ENCODE measurements at regions of chr13 and their contacts with region 1.

Region 1: DNA sequence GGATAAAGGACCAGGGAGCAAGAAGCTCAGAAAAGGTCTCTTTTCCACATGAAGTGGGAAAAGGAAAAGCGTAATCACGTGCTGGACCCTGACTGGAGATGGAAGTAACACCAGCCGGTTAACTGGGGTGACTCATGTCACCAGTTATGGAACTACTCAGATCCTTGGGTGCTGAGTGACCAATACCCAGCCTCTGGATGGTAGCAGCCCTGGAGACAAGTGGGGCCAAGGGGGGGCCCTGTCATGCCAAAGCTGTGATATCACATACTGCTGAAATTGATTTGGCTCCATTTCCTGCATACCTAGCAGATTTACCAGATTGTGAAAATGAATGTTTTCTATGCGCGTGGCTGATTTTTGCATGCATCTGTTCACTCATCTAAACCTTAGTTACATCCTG is 158.9 kb downstream of the ZIC5 start:
- DNase-seq: no peak
- H3K4me3 Mint-ChIP-seq: no peak overlapping the region
- H3K27ac Mint-ChIP-seq: no peak overlapping the region
- H3K4me1 Mint-ChIP-seq: peaks cover 6% of the 10 kb centered on the region
- H3K27me3 Mint-ChIP-seq: no peaks in the 10 kb centered on the region

Region 2: GRCh38 chr13:99281811-99282263 is 530.8 kb before region 1 on chr13:
- CTCF ChIA-PET with region 1: no interaction called
- intact Hi-C with region 1: loop called (anchors 10 kb)
- DNase-seq: peak; percentile 80
- H3K4me3 Mint-ChIP-seq: no peak overlapping the region
- H3K27ac Mint-ChIP-seq: peak overlapping the region; percentile 44
- H3K4me1 Mint-ChIP-seq: peaks cover 88% of the 10 kb centered on the region
- H3K27me3 Mint-ChIP-seq: no peaks in the 10 kb centered on the region